GM12878 (cell line): ENCODE measurements at regions of chr17 and their contacts with region 1.

Region 1: DNA sequence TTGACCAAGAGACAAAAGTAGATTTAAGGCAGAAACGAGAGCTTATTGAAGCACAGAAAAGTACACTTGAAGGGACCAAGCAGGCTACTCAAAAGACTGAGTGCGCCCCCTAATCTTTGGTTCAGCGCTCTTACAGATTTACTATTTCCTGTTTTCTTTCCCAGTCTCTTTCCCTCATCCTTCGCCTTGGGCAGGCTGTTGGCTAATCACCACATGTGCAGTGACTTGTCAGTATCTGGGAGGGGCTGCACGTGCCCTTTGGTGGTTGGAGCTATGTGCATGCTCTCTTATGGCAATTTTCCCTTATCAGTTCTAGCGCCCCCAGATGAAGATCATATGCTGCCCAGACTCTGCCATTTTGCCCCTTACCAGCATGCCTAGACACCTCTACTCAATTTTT is 35.4 kb upstream of the SHISA6 start:
- DNase-seq: no peak
- ATAC-seq: no peak
- H3K4me3 ChIP-seq: no peak overlapping the region
- H3K27ac ChIP-seq: no peak overlapping the region
- H3K4me1 ChIP-seq: no peaks in the 10 kb centered on the region
- H3K27me3 ChIP-seq: no peaks in the 10 kb centered on the region
- CTCF ChIP-seq: no peak
- EP300 ChIP-seq: no peak
- POLR2A ChIP-seq: no peak
- RAD21 ChIP-seq: no peak

Region 2: GRCh38 chr17:10843811-10844210 is 361.8 kb before region 1 on chr17:
- CTCF ChIA-PET with region 1: no interaction called
- POLR2A ChIA-PET with region 1: no interaction called
- RAD21 ChIA-PET with region 1: no interaction called
- SMC1A ChIA-PET with region 1: no interaction called
- in situ Hi-C with region 1: no loop called
- intact Hi-C with region 1: no loop called
- DNase-seq: no peak
- ATAC-seq: no peak
- H3K4me3 ChIP-seq: no peak overlapping the region
- H3K27ac ChIP-seq: no peak overlapping the region
- H3K4me1 ChIP-seq: no peaks in the 10 kb centered on the region
- H3K27me3 ChIP-seq: no peaks in the 10 kb centered on the region; a peak in 1 of 4 replicates
- CTCF ChIP-seq: no peak
- EP300 ChIP-seq: no peak
- POLR2A ChIP-seq: no peak
- RAD21 ChIP-seq: no peak

Region 3: GRCh38 chr17:11074451-11074850 is 131.2 kb before region 1 on chr17:
- CTCF ChIA-PET with region 1: no interaction called
- POLR2A ChIA-PET with region 1: no interaction called
- RAD21 ChIA-PET with region 1: no interaction called
- SMC1A ChIA-PET with region 1: no interaction called
- in situ Hi-C with region 1: loop called (anchors 10 kb)
- intact Hi-C with region 1: no loop called
- DNase-seq: no peak
- ATAC-seq: no peak
- H3K4me3 ChIP-seq: no peak overlapping the region
- H3K27ac ChIP-seq: no peak overlapping the region
- H3K4me1 ChIP-seq: no peaks in the 10 kb centered on the region
- H3K27me3 ChIP-seq: no peaks in the 10 kb centered on the region
- CTCF ChIP-seq: no peak
- EP300 ChIP-seq: no peak
- POLR2A ChIP-seq: no peak
- RAD21 ChIP-seq: no peak

Region 4: GRCh38 chr17:11182430-11182829 is 23.2 kb before region 1 on chr17:
- CTCF ChIA-PET with region 1: no interaction called
- POLR2A ChIA-PET with region 1: no interaction called
- RAD21 ChIA-PET with region 1: no interaction called
- SMC1A ChIA-PET with region 1: no interaction called
- in situ Hi-C with region 1: no loop called
- intact Hi-C with region 1: no loop called
- DNase-seq: no peak
- ATAC-seq: no peak
- H3K4me3 ChIP-seq: no peak overlapping the region
- H3K27ac ChIP-seq: no peak overlapping the region
- H3K4me1 ChIP-seq: no peaks in the 10 kb centered on the region
- H3K27me3 ChIP-seq: no peaks in the 10 kb centered on the region
- CTCF ChIP-seq: no peak
- EP300 ChIP-seq: no peak
- POLR2A ChIP-seq: no peak
- RAD21 ChIP-seq: no peak

Region 5: GRCh38 chr17:11245187-11245586 is 39.5 kb after region 1 on chr17:
- CTCF ChIA-PET with region 1: no interaction called
- POLR2A ChIA-PET with region 1: no interaction called
- RAD21 ChIA-PET with region 1: no interaction called
- SMC1A ChIA-PET with region 1: no interaction called
- in situ Hi-C with region 1: loop called (anchors 5 kb)
- intact Hi-C with region 1: no loop called
- DNase-seq: no peak
- ATAC-seq: no peak
- H3K4me3 ChIP-seq: no peak overlapping the region
- H3K27ac ChIP-seq: no peak overlapping the region
- H3K4me1 ChIP-seq: no peaks in the 10 kb centered on the region
- H3K27me3 ChIP-seq: no peaks in the 10 kb centered on the region
- CTCF ChIP-seq: no peak
- EP300 ChIP-seq: no peak
- POLR2A ChIP-seq: no peak
- RAD21 ChIP-seq: no peak